Panc1 (cell line): ENCODE measurements at regions of chr19 and their contacts with region 1.

Region 1: GRCh38 chr19:39390755-39391592 is at the starts of genes MED29 and PAF1:
- DNase-seq: peak; percentile 100
- ATAC-seq: peak; percentile 96
- H3K4me3 ChIP-seq: peak within 1 kb of the TSS; percentile 39 to 51
- H3K27ac ChIP-seq: peak within 1 kb of the TSS; percentile 86
- H3K4me1 ChIP-seq: peaks cover 24% of the 10 kb centered on the region
- H3K27me3 ChIP-seq: no peaks in the 10 kb centered on the region
- CTCF ChIP-seq: no peak
- total RNA-seq, gene MED29: 739 TPM
- total RNA-seq, gene PAF1: 901 TPM

Region 2: DNA sequence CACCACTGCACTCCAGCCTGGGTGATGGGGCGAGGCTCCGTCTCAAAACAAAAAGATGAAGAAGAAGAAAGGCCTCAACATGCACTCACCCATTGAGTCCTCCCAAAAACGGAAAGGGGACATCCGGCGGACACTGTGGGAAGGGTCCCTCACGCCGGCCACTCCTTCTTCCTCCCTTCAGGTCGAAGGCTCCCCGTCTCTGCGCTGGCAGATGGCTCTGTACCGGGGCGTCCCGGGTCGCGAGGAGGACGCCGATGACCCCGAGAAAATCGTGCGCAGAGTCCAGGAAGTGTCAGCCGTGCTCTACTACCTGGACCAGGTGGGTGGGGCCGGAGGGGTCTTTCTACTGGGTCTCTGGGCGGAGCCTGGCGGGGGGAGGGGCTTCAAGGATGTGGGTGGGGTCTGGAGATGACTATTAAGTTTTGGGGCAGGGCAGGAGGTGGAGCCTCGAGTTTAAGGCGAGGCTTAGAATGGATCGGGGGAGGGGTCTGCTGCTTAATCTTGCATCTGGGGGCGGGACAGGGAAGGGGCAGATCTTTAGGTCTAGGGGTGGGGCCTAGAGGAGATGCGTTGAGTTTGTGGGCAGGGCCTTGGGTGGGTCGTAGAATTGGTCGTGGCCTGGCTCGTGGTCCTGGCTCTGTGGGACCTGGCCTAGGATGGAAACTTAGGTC is 863.4 kb before region 1 on chr19:
- CTCF ChIA-PET with region 1: no interaction called
- POLR2A ChIA-PET with region 1: interaction called, 9 read pairs
- in situ Hi-C with region 1: loop called (anchors 10 kb)
- intact Hi-C with region 1: no loop called
- DNase-seq: no peak
- ATAC-seq: peak; percentile 20
- H3K4me3 ChIP-seq: peak overlapping the region in 1 of 2 experiments; percentile 32; a peak in 2 of 4 replicates
- H3K27ac ChIP-seq: no peak overlapping the region
- H3K4me1 ChIP-seq: peaks cover 4% of the 10 kb centered on the region; the same call in 1 of the 2 replicates
- H3K27me3 ChIP-seq: no peaks in the 10 kb centered on the region
- CTCF ChIP-seq: no peak

Region 3: DNA sequence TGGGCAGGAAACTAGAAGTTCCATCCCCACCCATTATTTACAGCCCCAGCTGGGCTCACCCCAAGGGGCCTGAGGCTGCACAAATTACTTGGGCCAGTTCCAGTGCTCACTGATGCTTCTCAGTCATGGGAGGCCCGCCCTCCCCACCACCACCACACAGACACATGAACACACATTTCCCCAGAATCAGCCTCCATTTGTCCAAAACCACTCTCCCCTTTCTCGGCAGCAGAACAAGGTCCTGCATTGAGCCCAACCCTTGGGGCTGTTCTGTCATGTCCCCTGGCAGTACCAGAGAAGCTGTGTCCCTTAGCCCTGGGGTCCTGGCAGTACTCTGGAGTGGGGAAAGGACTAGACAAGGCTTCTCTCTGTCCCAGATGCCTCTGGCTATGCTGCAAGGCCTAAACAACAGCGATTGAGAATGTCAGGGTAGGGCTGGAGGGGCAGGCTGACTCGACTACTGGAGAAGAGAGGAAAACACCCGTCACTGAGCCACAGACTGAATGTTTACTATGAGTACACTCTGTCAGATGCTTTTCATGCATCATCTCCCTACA is 27.0 kb before region 1 on chr19:
- CTCF ChIA-PET with region 1: interaction called, 10 read pairs
- POLR2A ChIA-PET with region 1: interaction called, 21 read pairs
- in situ Hi-C with region 1: no loop called
- intact Hi-C with region 1: no loop called
- DNase-seq: no peak
- ATAC-seq: peak; percentile 1; the same call in 1 of the 2 replicates
- H3K4me3 ChIP-seq: no peak overlapping the region
- H3K27ac ChIP-seq: no peak overlapping the region
- H3K4me1 ChIP-seq: peaks cover 5% of the 10 kb centered on the region; the same call in 1 of the 2 replicates
- H3K27me3 ChIP-seq: no peaks in the 10 kb centered on the region
- CTCF ChIP-seq: no peak

Region 4: DNA sequence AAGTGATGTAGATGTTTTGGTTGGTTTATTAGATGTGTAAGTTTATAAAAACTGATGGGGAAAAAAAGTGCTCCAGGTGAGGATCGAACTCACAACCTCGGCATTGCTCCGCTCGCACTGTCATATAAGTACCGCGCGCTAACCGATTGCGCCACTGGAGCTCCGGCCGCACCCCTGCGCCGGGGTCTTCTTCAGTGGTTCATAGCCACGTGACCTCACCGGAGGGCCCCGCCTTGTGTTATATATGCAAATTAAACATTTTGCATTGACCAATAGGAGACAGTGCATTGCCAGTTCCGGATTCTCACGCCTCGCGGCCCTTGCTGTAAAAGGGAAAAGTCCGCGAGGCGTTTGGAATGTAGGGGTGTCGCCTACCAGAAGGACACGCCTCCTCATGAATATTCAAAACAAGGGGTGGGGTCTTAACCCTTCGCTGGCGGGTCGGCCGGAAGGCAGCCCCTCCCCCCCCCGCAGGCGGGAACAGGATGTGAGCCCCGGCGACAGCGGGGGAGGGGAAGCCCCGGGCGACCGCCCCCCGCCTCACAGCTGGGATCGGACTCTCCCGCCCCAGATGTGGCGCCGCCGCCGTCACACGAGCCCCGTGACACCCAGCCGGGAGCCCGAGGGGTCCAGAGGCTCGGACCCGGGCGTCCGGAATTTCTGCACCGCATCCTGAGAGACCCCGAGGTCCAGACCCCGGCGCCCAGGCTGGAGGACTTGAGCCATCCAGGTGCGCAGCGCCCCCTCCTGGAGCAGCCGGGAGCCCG is 21.3 kb after region 1 on chr19 and contains the start of gene PLEKHG2:
- CTCF ChIA-PET with region 1: interaction called, 280 read pairs
- POLR2A ChIA-PET with region 1: interaction called, 145 read pairs
- in situ Hi-C with region 1: no loop called
- intact Hi-C with region 1: loop called (anchors 1 kb)
- DNase-seq: peak; percentile 100
- ATAC-seq: peak; percentile 67
- H3K4me3 ChIP-seq: peak within 1 kb of the TSS; percentile 42 to 55
- H3K27ac ChIP-seq: peak within 1 kb of the TSS; percentile 92
- H3K4me1 ChIP-seq: peaks cover 58% of the 10 kb centered on the region
- H3K27me3 ChIP-seq: no peaks in the 10 kb centered on the region
- CTCF ChIP-seq: no peak
- total RNA-seq, gene PLEKHG2: 1,988 TPM

Region 5: GRCh38 chr19:39502640-39503417 is 111.9 kb after region 1 on chr19:
- CTCF ChIA-PET with region 1: interaction called, 6 read pairs
- POLR2A ChIA-PET with region 1: interaction called, 7 read pairs
- in situ Hi-C with region 1: loop called (anchors 5 kb)
- intact Hi-C with region 1: no loop called
- DNase-seq: peak; percentile 93
- ATAC-seq: peak; percentile 24
- H3K4me3 ChIP-seq: peak overlapping the region in 1 of 2 experiments; percentile 34; a peak in 2 of 4 replicates
- H3K27ac ChIP-seq: peak overlapping the region; percentile 3; the same call in 1 of the 2 replicates
- H3K4me1 ChIP-seq: peaks cover 27% of the 10 kb centered on the region
- H3K27me3 ChIP-seq: peaks cover 8% of the 10 kb centered on the region
- CTCF ChIP-seq: no peak

Region 6: DNA sequence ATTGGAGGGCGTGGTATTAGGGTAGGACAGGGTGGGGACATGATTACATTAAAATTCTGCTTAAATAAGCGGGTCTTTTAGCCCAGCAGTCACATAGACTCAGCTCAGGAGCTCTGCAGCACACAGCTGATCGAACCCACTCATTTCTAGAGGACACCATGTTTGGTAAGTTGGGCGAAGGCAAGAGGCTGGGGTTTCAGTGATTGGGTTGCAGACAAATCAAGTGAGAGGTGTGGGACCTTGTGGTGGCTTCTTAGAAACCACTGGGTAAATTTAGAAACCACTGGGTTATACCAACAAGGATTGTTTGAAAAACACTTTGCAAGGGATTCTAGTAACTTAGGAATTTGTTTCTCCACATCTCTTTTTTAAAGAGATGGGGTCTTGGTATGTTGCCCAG is 387.8 kb after region 1 on chr19 and contains the start of gene LEUTX:
- CTCF ChIA-PET with region 1: no interaction called
- POLR2A ChIA-PET with region 1: no interaction called
- in situ Hi-C with region 1: loop called (anchors 5 kb)
- intact Hi-C with region 1: no loop called
- DNase-seq: no peak
- ATAC-seq: no peak
- H3K4me3 ChIP-seq: no peak within 1 kb of the TSS
- H3K27ac ChIP-seq: no peak within 1 kb of the TSS
- H3K4me1 ChIP-seq: no peaks in the 10 kb centered on the region
- H3K27me3 ChIP-seq: peaks cover 86% of the 10 kb centered on the region
- CTCF ChIP-seq: no peak
- total RNA-seq, gene LEUTX: not detected